ENCODE measurements at regions of chr15 and their contacts with region 1.

Region 1: DNA sequence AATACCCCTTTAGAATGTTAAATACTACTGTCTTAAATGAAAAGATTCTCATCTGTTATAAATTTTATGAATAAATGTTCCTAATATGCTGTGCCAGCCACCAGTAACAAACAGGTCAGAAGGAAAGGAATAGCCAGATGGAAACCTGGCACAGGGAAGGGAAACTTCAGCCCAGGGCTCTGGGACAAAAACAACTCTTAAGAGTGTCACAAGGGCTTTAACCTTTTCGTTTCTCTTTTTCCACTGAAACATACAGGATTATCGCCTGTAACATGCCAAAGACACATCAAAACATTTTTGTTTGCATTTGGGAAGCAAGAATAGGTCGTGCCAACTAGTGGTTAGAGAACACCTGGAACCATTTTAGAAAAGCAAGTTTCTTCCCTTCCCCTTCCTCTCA is 109.0 kb upstream of the NEDD4 start:
- DNase-seq: no peak
- ATAC-seq: peak in 1 of 2 donors; percentile 36

Region 2: GRCh38 chr15:56245871-56246814 is 143.7 kb after region 1 on chr15:
- intact Hi-C with region 1: loop called in 1 of 2 experiments (anchors 10 kb)
- DNase-seq: peak; percentile 90
- ATAC-seq: peak; percentile 60 to 82